HEK293 (cell line): ENCODE measurements at regions of chr7 and their contacts with region 1.

Region 1: GRCh38 chr7:95684037-95684436 is 87.7 kb upstream of the PDK4 start:
- H3K4me3 ChIP-seq: no peak overlapping the region
- H3K27ac ChIP-seq: no peak overlapping the region
- H3K4me1 ChIP-seq: no peaks in the 10 kb centered on the region
- CTCF ChIP-seq: peak; percentile 31; the same call in 1 of the 2 replicates

Region 2: DNA sequence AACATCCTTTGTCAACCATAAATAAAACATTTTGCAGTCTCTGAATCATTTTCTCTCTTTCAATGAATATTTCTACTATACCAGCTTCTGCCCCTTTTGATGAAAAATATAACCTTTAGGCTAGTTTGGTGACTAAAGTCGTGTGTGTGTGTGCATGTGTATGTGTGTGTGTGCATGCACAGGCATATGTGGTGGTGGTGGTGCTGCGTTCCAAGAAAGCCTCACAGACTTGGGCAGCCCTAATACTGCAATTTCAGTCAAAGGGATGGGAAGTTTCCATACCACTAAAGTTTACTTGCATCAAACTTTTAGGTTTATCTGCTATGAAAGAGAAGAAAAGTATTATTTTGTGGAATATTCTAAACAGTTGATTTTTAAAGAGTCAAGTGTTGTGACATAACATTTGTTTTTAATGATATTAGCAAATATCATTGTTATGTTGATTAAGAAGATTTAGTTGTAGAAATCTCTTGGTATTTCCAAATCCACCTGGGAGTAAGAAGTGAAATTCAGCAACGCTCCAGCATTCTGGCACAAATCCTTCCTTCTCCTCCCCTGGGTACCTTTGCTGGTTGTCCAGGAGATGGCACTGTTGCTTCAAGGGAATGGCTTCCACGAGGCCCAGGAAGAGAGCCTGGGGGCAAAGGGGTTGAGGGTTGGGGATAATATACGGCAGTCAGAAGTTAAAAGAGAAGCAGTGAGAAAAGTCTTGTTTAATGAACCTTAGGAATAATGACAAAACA is 156.8 kb before region 1 on chr7:
- CTCF ChIA-PET with region 1: interaction called, 324 read pairs
- POLR2A ChIA-PET with region 1: no interaction called
- H3K4me3 ChIP-seq: no peak overlapping the region
- H3K27ac ChIP-seq: no peak overlapping the region
- H3K4me1 ChIP-seq: no peaks in the 10 kb centered on the region
- CTCF ChIP-seq: peak; percentile 75

Region 3: DNA sequence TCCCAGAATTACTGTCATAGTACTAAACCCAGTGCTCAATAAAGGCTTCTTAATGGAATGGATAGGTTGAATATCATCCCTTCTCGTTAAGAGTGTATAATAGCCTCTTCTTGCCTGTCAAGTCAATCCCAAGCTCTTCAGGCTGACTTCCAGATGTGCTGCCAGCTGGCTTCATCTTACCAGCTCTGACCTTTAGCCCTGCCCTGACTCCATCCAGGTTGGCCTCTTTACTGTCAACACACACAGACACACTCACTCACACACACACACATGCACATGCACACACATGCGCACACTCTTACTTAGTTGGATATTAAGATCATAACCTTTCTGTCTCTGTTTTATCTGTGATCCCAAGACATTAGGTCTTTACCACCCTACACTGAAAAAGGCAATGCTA is 149.2 kb before region 1 on chr7:
- CTCF ChIA-PET with region 1: interaction called, 324 read pairs
- POLR2A ChIA-PET with region 1: no interaction called
- H3K4me3 ChIP-seq: no peak overlapping the region
- H3K27ac ChIP-seq: no peak overlapping the region
- H3K4me1 ChIP-seq: no peaks in the 10 kb centered on the region
- CTCF ChIP-seq: no peak

Region 4: DNA sequence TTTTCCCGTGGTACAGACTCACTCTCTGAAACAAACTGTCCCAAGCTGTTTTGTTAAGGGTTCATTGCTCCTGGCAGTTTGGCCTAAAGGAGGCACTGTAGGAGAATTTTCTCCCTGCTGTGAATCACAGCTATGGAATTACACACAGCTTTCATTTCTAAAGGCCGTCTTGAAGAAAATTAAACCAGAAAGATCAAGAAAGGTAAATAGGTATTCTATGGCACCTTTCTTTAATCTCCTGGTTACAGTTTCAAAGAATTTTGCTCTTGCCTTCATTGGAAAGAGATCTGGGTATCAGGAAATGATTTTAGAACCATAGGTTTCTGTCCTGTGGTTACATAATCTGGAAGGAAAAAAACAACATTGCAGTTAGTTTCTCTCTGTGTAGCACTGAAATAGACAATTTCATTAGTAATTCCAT is 138.9 kb before region 1 on chr7:
- CTCF ChIA-PET with region 1: interaction called, 109 read pairs
- POLR2A ChIA-PET with region 1: no interaction called
- H3K4me3 ChIP-seq: no peak overlapping the region
- H3K27ac ChIP-seq: no peak overlapping the region
- H3K4me1 ChIP-seq: peaks cover 11% of the 10 kb centered on the region
- CTCF ChIP-seq: no peak

Region 5: DNA sequence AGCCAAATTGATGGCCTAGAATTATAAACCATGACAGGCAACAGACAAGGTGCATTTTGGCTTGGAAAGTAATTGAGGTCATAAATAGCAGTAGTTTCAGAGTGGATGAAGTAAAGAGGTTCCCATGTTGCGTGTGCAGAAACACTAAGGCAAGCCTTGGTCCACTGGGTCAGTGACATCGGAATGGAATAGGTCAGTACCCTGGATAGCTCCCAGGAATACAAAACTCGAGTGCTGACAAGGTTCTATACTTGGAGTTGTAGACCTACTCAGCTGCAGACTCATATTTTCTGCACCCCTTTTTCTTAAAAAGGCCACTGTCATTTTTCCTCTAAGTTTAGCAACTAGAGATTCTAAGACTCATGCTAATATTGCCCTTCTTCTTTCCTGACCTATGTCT is 221.1 kb after region 1 on chr7:
- CTCF ChIA-PET with region 1: no interaction called
- POLR2A ChIA-PET with region 1: no interaction called
- H3K4me3 ChIP-seq: no peak overlapping the region
- H3K27ac ChIP-seq: no peak overlapping the region
- H3K4me1 ChIP-seq: no peaks in the 10 kb centered on the region
- CTCF ChIP-seq: no peak

Region 6: GRCh38 chr7:96034940-96035727 is 351.1 kb after region 1 on chr7:
- CTCF ChIA-PET with region 1: no interaction called
- POLR2A ChIA-PET with region 1: no interaction called
- H3K4me3 ChIP-seq: no peak overlapping the region
- H3K27ac ChIP-seq: no peak overlapping the region
- H3K4me1 ChIP-seq: no peaks in the 10 kb centered on the region
- CTCF ChIP-seq: no peak